RWPE1 (cell line): ENCODE measurements at regions of chr21 and their contacts with region 1.

Region 1: GRCh38 chr21:41753001-41753903 is 13.6 kb downstream of the RIPK4 start:
- DNase-seq: no peak
- H3K27ac ChIP-seq: peak overlapping the region; percentile 91
- CTCF ChIP-seq: no peak

Region 2: DNA sequence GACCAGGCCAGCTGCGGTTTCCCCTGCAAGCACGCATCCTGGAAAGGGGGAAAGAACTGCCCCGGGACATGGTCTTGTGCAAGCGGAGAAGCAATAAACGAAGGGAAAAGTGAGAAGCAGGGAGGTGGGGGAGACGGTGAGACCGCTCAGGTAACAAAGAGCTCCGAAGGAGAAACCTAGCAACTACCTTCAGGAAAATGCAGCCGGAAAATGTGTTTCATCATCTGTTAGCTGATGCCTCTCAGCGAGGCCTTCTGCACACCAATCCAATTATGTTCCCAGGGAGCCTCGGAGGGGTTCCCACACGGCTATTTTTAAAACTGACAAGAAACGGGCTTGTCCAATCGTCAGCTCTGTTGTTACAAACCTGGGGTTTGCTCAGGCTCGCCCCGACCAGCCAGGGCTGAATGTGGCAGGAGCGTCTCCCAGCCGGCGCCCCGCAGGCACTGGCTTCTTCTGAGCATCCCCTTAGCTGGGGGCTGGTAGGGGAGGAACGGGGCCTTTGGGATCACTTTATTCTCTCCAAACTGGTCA is 10.2 kb after region 1 on chr21:
- CTCF ChIA-PET with region 1: no interaction called
- POLR2A ChIA-PET with region 1: interaction called, 10 read pairs
- DNase-seq: peak; percentile 86
- H3K27ac ChIP-seq: peak overlapping the region; percentile 95
- CTCF ChIP-seq: no peak